Upper lobe of right lung (tissue), 1 donor: ENCODE measurements at regions of chr12 and their contacts with region 1.

Region 1: DNA sequence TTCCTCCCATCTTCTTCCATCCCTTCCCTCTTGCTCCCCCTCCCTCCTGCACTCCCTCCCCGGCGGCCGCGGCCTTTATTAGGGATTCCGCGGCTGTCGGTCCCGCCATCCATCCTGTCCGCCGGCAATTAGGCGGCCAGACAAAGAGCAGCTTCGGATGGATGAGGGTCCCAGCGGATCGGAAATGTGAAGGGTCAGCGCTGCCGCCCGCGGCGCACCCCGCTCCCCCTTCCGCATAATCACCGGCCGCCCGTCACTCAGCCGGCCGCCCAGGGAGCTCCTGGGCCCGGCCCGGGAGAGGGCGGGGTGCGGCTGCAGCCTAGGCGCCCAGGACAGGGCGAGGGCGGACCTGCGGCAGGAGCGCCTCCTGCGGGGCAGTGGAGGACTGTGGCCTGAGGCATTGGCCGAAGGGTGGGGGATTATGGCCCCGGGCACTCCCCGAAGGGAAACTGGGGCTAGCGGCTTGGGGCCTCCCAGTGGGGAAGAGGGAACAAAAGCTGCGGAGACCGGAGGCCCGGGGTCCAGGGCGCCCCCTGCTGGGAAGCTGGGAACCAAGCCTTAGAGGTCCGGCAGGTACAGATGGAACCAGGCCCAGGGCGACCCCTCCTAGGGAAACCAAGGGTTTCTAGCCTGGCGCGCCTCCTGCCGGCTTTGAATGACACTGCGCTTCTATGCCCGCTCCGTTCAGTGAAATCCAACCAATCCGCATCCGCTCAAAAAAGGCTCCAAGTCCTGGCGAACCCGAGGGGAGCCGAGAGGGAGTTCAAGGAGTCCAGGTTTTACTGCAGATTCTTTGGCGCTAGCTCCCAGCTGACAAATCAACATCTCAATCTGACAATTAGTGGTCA is 4.4 kb upstream of the DNAJC22 start:
- DNase-seq: peak; percentile 90
- ATAC-seq: peak; percentile 76
- H3K4me3 ChIP-seq: peak overlapping the region; percentile 42
- H3K27ac ChIP-seq: no peak overlapping the region
- H3K4me1 ChIP-seq: peaks cover 40% of the 10 kb centered on the region
- H3K27me3 ChIP-seq: peaks cover 67% of the 10 kb centered on the region
- CTCF ChIP-seq: peak; percentile 85

Region 2: DNA sequence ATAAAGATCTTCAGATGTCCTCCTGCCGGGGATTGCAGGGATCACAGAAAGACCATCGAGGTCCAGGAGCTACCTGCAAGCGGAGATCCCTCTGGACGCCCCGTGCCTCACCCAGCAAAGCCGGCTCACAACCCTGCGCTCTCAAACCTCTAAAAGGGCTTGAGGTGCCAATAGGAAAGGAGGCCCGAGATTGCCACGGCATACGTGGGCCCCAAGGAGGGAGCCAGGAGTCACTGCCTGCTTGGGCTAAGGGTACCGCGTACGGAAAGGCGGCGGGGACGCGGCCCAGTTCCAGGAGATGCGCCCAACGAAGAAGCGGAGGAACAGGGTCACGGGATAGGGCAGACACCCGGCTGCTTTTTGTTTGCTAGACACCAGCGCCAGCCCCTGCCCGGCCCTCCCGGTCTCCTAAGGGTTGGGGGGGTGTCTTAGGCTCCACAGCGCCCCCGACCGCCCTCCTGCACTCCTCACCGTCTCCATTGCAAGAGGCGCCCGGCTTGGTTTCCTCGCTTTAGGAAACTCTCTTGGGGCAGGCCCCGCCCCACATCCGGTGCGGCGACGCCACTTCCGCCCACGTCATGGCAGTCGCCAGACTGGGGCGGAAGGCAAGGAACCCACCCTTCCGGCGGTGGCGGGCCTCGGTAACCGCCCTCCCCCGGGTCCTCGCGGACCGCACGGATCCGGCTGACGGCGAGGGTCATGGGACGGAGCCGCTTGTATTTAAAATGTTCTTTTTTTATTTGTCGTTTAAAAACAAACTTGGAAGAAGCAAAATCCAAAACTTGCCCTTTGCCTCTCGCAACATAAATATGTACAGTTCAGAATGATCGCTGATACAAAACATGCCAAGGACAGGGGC is 323.8 kb before region 1 on chr12 and contains the start of gene PRKAG1:
- intact Hi-C with region 1: no loop called
- DNase-seq: peak; percentile 98
- ATAC-seq: peak; percentile 96
- H3K4me3 ChIP-seq: peak within 1 kb of the TSS; percentile 94
- H3K27ac ChIP-seq: peak within 1 kb of the TSS; percentile 97
- H3K4me1 ChIP-seq: peaks cover 13% of the 10 kb centered on the region
- H3K27me3 ChIP-seq: no peaks in the 10 kb centered on the region
- CTCF ChIP-seq: peak; percentile 57
- total RNA-seq, gene PRKAG1: 46.5 TPM

Region 3: DNA sequence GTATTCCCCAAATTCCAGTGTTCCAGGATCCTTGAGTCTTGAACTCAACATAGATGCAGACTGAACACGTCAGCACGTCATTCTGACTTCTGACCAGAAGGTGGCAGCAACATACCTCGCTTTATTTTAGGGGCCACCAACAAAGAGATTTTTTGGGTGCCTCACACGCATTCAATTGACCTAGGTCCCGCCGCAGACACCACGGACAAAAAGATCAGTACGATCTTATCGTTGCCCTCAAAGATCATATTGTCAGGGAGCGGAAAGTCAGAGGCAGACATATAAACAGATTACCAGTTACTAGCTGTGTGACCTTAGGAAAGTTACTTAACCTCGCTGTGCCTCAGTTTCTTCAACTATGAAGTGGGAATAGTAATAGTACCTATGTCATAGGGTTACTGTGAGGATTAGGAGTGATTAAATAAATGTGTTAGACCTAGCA is 53.9 kb before region 1 on chr12:
- intact Hi-C with region 1: loop called (anchors 10 kb)
- DNase-seq: peak; percentile 29
- ATAC-seq: peak; percentile 85
- H3K4me3 ChIP-seq: no peak overlapping the region
- H3K27ac ChIP-seq: no peak overlapping the region
- H3K4me1 ChIP-seq: peaks cover 2% of the 10 kb centered on the region
- H3K27me3 ChIP-seq: peaks cover 12% of the 10 kb centered on the region
- CTCF ChIP-seq: peak; percentile 88